ENCODE measurements at regions of chr5 and their contacts with region 1.

Region 1: GRCh38 chr5:65760504-65761275 is 38.7 kb downstream of the NLN start:
- DNase-seq: peak; percentile 8
- ATAC-seq: peak; percentile 83
- H3K4me3 ChIP-seq: no peak overlapping the region
- H3K27ac ChIP-seq: no peak overlapping the region
- H3K4me1 ChIP-seq: no peaks in the 10 kb centered on the region
- H3K27me3 ChIP-seq: no peaks in the 10 kb centered on the region
- CTCF ChIP-seq: peak; percentile 40 to 66 (median 57); a peak in 4 of 6 replicates
- EP300 ChIP-seq: no peak
- POLR2A ChIP-seq: no peak
- RAD21 ChIP-seq: peak; percentile 88

Region 2: DNA sequence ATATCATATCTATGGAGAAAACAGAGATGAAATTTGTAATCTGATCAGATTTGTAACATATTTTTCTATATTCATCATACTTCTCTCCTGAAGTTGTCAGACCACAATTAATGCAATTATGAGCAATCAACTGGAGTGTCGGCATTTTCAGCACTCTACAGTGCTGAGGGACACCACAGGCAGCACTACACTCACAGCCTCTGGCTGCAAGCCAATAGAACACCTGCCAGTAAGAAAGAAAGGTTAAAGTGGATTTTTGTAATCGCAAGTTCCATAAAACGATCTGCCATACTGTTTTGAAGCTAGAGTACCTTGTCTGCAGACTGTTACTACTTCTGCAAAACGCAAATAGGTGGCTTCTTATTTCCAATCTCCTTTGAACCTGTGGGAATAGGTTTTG is 426.6 kb before region 1 on chr5:
- CTCF ChIA-PET with region 1: no interaction called
- POLR2A ChIA-PET with region 1: no interaction called
- RAD21 ChIA-PET with region 1: no interaction called
- SMC1A ChIA-PET with region 1: no interaction called
- in situ Hi-C with region 1: no loop called
- intact Hi-C with region 1: no loop called
- DNase-seq: no peak
- ATAC-seq: no peak
- H3K4me3 ChIP-seq: no peak overlapping the region
- H3K27ac ChIP-seq: no peak overlapping the region
- H3K4me1 ChIP-seq: no peaks in the 10 kb centered on the region
- H3K27me3 ChIP-seq: no peaks in the 10 kb centered on the region
- CTCF ChIP-seq: no peak
- EP300 ChIP-seq: no peak
- POLR2A ChIP-seq: no peak
- RAD21 ChIP-seq: no peak

Region 3: GRCh38 chr5:65364907-65365306 is 395.8 kb before region 1 on chr5:
- CTCF ChIA-PET with region 1: no interaction called
- POLR2A ChIA-PET with region 1: no interaction called
- RAD21 ChIA-PET with region 1: no interaction called
- SMC1A ChIA-PET with region 1: no interaction called
- in situ Hi-C with region 1: no loop called
- intact Hi-C with region 1: no loop called
- DNase-seq: no peak
- ATAC-seq: peak; percentile 31; the same call in 2 of the 3 replicates
- H3K4me3 ChIP-seq: no peak overlapping the region
- H3K27ac ChIP-seq: no peak overlapping the region
- H3K4me1 ChIP-seq: no peaks in the 10 kb centered on the region
- H3K27me3 ChIP-seq: no peaks in the 10 kb centered on the region
- CTCF ChIP-seq: no peak
- EP300 ChIP-seq: no peak
- POLR2A ChIP-seq: no peak
- RAD21 ChIP-seq: no peak

Region 4: DNA sequence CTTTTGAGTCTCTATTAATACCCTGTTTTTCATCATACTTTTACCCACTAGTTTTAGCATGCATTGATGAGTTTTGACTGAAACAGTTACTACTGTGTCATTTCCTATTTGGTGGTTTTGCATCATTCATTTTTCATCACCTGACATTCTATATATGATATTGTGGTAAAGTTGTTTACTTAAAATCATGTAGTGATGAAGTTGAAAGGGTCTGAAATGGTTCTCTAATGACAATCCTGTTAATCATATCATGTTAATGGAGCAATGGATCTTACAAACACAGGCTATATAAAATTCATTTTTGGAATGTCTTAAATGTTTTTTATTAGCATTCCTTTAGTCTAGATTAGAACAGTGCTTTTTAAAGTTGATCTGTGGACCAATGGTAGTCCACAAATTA is 249.8 kb after region 1 on chr5:
- CTCF ChIA-PET with region 1: no interaction called
- POLR2A ChIA-PET with region 1: no interaction called
- RAD21 ChIA-PET with region 1: no interaction called
- SMC1A ChIA-PET with region 1: no interaction called
- in situ Hi-C with region 1: no loop called
- intact Hi-C with region 1: loop called (anchors 5 kb)
- DNase-seq: peak; percentile 12
- ATAC-seq: peak; percentile 79
- H3K4me3 ChIP-seq: no peak overlapping the region; the same call in 1 of the 2 replicates
- H3K27ac ChIP-seq: peak overlapping the region; percentile 34; the same call in 1 of the 2 replicates
- H3K4me1 ChIP-seq: peaks cover 5% of the 10 kb centered on the region; the same call in 1 of the 2 replicates
- H3K27me3 ChIP-seq: no peaks in the 10 kb centered on the region
- CTCF ChIP-seq: no peak
- EP300 ChIP-seq: peak in 1 of 2 experiments; percentile 50; a peak in 1 of 4 replicates
- POLR2A ChIP-seq: no peak
- RAD21 ChIP-seq: no peak